Activated naive CD8-positive, alpha-beta T cell treated with anti-CD3 and anti-CD28 coated beads, Interleukin-2, amount 10 ng/mL, durations not matched to agents 7 days and 5 days (primary cell): ENCODE measurements at regions of chr2 and their contacts with region 1.

Region 1: GRCh38 chr2:197434541-197435513 is at the start of gene SF3B1:
- DNase-seq: peak; percentile 99
- ATAC-seq: peak; percentile 95
- H3K4me3 Mint-ChIP-seq: peak within 1 kb of the TSS; percentile 85
- H3K27ac Mint-ChIP-seq: peak within 1 kb of the TSS; percentile 100
- H3K4me1 Mint-ChIP-seq: peaks cover 38% of the 10 kb centered on the region
- H3K27me3 Mint-ChIP-seq: no peaks in the 10 kb centered on the region
- total RNA-seq, gene SF3B1: 388 to 392 TPM

Region 2: DNA sequence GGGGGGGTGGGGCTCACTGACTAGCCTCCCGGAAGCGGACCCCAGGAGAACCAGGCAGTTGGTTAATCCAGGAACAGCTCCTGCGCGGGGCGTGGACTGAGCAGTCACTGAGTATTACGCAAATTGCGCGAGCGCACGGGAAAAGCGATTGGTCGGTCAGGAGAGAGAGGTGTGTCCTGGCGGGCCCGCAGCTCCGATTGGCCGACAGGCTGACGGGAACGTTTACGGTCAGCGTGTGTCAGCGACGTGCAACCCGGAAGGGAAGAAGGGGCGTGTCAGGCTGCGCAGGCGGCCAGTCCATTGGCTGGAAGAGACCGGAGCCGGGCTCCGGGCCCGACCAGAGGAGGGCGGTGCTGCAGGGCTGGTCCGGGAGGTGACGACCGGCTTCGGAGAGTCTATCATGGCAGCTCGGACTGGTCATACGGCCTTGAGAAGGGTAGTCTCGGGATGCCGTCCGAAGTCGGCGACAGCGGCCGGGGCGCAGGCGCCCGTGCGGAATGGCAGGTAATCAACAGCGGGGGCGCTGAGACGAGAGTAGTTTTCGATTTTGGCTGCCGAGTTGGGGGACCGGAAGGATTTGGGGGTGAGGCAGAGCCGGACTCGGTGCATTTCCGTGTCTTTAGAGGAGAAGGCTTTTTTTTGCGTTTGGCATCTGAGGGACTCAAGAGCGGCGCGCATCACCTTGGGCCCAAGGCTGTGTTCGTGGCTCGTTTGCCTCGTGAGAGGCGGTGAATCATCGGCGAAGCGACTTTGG is 18.5 kb after region 1 on chr2 and contains the start of gene COQ10B:
- POLR2A ChIA-PET with region 1: interaction called, 75 read pairs
- DNase-seq: peak; percentile 94
- ATAC-seq: peak; percentile 93
- H3K4me3 Mint-ChIP-seq: peak within 1 kb of the TSS; percentile 88
- H3K27ac Mint-ChIP-seq: peak within 1 kb of the TSS; percentile 96
- H3K4me1 Mint-ChIP-seq: peaks cover 24% of the 10 kb centered on the region
- H3K27me3 Mint-ChIP-seq: no peaks in the 10 kb centered on the region
- total RNA-seq, gene COQ10B: 24.8 to 25.2 TPM